Upper lobe of right lung (tissue), 1 donor: ENCODE measurements at regions of chr13 and their contacts with region 1.

Region 1: GRCh38 chr13:48773531-48774275 is 120.0 kb downstream of the CYSLTR2 start:
- DNase-seq: no peak
- ATAC-seq: no peak
- H3K4me3 ChIP-seq: no peak overlapping the region
- H3K27ac ChIP-seq: no peak overlapping the region
- H3K4me1 ChIP-seq: no peaks in the 10 kb centered on the region
- H3K27me3 ChIP-seq: no peaks in the 10 kb centered on the region
- CTCF ChIP-seq: no peak

Region 2: GRCh38 chr13:48594096-48594815 is 179.4 kb before region 1 on chr13:
- intact Hi-C with region 1: loop called (anchors 5 kb)
- DNase-seq: no peak
- ATAC-seq: no peak
- H3K4me3 ChIP-seq: no peak overlapping the region
- H3K27ac ChIP-seq: no peak overlapping the region
- H3K4me1 ChIP-seq: no peaks in the 10 kb centered on the region
- H3K27me3 ChIP-seq: no peaks in the 10 kb centered on the region
- CTCF ChIP-seq: no peak

Region 3: DNA sequence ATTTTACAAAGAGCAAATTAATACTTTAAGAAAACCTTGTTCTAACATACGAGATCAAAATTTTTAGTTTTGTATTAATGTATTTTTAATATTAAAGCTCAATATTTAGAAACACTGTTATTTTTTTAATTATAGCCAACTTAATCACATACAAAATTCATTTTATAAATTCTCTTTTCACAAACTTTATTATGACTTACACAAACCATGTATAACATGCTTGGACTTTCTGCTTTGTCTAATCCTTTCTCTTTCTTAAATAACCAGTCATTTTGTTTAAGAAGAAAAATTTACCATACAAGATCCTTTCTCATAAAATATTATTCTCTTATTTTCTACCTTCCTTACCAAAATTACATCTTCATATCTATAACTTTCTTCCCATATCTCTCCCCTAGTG is 57.7 kb before region 1 on chr13:
- intact Hi-C with region 1: no loop called
- DNase-seq: no peak
- ATAC-seq: no peak
- H3K4me3 ChIP-seq: no peak overlapping the region
- H3K27ac ChIP-seq: no peak overlapping the region
- H3K4me1 ChIP-seq: no peaks in the 10 kb centered on the region
- H3K27me3 ChIP-seq: no peaks in the 10 kb centered on the region
- CTCF ChIP-seq: no peak

Region 4: DNA sequence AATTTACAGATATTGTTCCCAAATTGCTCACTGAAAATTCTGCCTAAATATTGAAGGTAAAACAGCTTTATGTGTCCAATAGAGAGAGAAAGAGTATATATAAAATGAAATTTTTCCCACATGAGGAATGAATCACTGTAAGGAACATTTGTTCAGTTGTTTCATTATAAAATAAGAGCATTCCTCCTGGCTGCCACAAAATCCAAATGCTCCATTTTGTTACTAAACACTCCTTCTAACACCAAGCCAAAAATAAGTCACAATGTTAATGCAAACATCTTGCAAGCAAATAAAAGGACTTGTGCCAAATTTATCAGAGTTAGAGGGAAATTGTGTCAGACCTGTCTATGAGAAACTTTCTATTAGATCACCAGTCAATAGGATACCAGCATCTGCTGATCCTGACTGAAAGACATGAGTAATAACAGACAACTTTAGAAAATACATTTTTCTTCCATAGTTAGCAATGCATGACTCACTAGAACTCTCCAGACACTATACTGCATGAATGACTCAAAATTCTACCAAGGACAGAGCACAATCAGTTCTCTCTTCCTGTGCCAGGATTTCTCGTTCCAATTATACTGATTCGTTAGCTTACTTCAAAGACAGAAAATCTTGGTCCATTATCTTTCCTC is 118.5 kb after region 1 on chr13:
- intact Hi-C with region 1: no loop called
- DNase-seq: no peak
- ATAC-seq: no peak
- H3K4me3 ChIP-seq: no peak overlapping the region
- H3K27ac ChIP-seq: no peak overlapping the region
- H3K4me1 ChIP-seq: no peaks in the 10 kb centered on the region
- H3K27me3 ChIP-seq: no peaks in the 10 kb centered on the region
- CTCF ChIP-seq: no peak